PC-9 (cell line): ENCODE measurements at regions of chr17 and their contacts with region 1.

Region 1: GRCh38 chr17:72421128-72422092 is 300.6 kb downstream of the SOX9 start:
- DNase-seq: peak; percentile 90 to 99
- H3K4me3 ChIP-seq: peak overlapping the region; percentile 56; the same call in 1 of the 2 replicates
- H3K27ac ChIP-seq: peak overlapping the region; percentile 98
- H3K4me1 ChIP-seq: peaks cover 66% of the 10 kb centered on the region
- H3K27me3 ChIP-seq: no peaks in the 10 kb centered on the region
- CTCF ChIP-seq: no peak

Region 2: DNA sequence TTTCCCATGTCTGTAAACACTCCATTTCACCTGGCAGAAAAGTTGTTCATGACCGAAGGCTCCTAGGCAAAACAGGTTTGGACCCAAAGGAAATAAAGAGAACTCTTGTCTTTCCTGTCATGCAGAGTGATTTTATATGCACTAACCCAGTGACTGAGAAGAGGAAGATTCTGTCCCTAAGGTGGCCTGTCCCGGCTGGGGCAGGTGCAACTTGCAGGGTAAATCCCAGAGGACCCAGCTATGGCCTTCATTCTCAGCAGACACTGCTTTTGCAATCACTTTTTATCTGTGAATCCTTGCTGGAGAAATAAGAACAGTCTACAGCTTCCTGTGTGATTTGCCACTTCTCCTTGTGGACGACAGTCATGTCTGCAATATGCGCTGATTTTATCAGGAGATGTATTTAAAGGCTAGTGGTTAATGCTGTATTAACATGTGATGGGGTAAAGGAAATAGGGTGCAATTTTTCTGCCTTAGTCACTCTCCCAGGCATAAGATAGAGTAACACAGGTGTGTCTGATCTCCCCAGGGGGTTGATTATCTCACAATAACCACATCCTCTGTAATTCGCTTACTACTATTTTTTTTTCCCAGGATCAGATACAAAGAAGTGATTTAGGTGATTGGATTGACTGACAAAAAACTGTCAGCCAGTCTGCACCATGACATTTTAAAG is 997.4 kb before region 1 on chr17:
- CTCF ChIA-PET with region 1: no interaction called
- POLR2A ChIA-PET with region 1: no interaction called
- intact Hi-C with region 1: loop called (anchors 1 kb)
- DNase-seq: peak; percentile 59 to 98
- H3K4me3 ChIP-seq: 0 out of 2 replicates have a peak overlapping the region, but pooled peaks have one; percentile 10
- H3K27ac ChIP-seq: peak overlapping the region; percentile 96
- H3K4me1 ChIP-seq: peaks cover 24% of the 10 kb centered on the region
- H3K27me3 ChIP-seq: no peaks in the 10 kb centered on the region
- CTCF ChIP-seq: peak; percentile 30; the same call in 1 of the 2 replicates

Region 3: DNA sequence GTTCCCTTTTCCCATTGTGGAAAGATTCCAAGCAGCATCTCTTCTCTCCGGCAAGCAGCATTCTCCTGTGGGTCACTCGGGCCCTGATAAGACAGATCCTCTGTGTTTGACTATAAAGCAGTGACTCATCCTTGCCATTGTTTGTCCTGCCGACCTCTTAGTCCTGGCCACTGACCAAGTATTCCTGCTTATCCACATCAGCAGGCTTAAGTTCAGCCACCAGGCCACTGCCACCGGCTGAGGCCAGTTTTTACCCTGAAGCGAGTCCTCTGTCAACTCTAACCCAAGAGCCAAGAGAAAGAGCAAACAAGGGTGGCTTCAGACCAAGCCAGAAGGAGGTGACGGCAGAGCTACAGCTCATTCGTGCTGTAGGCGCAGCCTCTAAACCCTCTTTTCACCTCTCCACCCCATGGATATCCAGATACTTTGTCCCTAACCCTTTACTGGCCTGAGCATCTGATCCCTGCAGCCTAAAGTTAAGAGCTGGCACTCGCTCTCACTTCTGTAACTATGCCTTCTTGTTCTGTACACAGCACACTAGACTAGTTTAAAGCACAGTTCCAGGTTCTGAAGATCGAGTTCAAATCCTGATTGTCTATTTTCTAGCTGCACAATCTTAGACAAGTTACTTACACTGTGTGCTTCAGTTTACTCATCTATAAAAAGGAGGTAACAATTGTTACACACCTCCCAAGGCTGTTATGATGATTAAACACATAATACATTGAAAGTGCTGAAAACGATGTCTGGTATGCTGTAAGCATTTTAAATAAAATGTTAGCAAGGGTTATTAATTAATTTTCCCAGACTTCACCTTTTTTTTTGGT is 269.6 kb before region 1 on chr17:
- CTCF ChIA-PET with region 1: no interaction called
- POLR2A ChIA-PET with region 1: interaction called, 10 read pairs
- intact Hi-C with region 1: loop called (anchors 2 kb)
- DNase-seq: peak; percentile 86 to 99
- H3K4me3 ChIP-seq: peak overlapping the region; percentile 38; the same call in 1 of the 2 replicates
- H3K27ac ChIP-seq: peak overlapping the region; percentile 92
- H3K4me1 ChIP-seq: peaks cover 36% of the 10 kb centered on the region
- H3K27me3 ChIP-seq: no peaks in the 10 kb centered on the region
- CTCF ChIP-seq: no peak

Region 4: DNA sequence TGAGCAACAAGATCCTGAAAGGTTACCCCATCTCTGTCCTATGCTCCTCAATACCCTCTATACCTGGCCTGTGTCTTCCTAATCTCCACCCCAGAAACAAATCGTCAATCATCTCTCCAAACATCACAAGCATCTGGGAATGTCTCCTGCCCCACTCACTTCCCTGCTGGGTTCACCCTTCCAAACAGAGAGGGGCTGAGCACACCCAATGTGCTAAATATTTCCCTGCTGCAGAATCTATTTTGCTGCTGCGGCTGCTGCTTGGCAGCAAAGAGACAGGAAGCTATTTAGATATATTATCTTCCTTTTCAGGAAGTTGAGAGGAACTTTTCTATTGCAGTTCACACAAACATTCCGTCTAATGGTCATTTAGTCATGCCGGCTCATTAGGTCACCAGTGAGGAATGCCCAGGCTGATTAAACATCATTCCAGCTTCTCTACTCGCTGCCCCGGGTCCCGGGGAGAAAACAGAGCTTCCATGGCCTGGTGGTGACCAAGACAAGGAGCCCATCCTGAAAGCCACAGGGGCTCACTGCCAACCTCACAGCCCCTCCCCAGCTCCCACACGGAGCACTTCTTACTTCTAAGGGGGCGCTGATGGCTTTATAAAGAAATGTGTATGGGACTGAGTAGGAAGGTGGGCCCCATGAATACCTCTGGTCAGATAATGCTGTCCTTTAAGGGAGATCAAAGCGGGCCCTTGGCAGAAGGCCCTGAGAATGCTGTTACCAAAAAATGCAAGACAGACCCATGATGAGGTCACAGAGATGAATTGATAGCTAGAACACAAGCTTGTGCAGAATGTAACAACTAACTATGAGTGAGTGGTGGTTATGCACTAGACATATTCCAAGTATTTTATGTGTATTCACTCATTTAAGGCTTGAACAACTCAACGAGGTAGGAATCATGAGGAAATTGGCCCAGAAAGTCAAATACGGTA is 82.3 kb before region 1 on chr17:
- CTCF ChIA-PET with region 1: no interaction called
- POLR2A ChIA-PET with region 1: no interaction called
- intact Hi-C with region 1: loop called (anchors 1 kb)
- DNase-seq: peak; percentile 81 to 97
- H3K4me3 ChIP-seq: no peak overlapping the region; the same call in 1 of the 2 replicates
- H3K27ac ChIP-seq: peak overlapping the region; percentile 88
- H3K4me1 ChIP-seq: peaks cover 34% of the 10 kb centered on the region
- H3K27me3 ChIP-seq: no peaks in the 10 kb centered on the region
- CTCF ChIP-seq: no peak

Region 5: DNA sequence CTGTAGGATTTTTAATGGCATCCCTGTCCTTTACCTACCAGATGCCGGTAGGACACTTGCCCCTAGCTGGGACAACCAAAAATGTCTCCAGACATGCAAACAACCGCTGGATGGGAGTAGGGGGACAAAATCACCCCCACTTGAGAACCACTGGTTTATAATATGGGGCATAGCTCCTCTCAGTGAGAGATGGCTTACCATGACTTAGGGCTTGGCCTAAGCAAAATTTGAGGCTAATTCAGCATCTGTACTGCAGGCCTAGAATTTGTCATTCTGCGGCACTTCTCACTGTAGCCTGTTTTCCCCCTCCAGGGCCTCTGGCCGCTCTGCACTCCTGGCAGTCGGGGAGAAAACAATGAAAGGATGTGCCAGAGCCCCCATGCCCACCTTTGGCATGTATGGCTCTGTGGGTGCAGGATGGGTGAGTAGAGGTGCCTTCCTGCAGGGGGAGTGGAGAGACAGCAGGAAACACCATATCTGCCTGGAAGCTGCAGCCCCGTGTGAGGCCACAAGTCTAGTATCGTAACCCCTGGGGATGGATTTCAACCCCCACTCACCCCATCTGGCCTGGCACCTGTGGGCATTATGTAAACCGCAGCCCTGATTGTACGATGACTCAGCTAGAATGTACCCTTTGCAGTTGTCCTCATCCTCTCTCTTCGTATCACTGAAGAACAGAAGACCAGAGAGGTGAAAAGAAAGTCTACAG is 32.5 kb before region 1 on chr17:
- CTCF ChIA-PET with region 1: interaction called, 3 read pairs
- POLR2A ChIA-PET with region 1: no interaction called
- intact Hi-C with region 1: loop called (anchors 1 kb)
- DNase-seq: peak; percentile 86 to 89
- H3K4me3 ChIP-seq: no peak overlapping the region
- H3K27ac ChIP-seq: peak overlapping the region; percentile 87
- H3K4me1 ChIP-seq: peaks cover 86% of the 10 kb centered on the region
- H3K27me3 ChIP-seq: no peaks in the 10 kb centered on the region
- CTCF ChIP-seq: peak; percentile 63

Region 6: DNA sequence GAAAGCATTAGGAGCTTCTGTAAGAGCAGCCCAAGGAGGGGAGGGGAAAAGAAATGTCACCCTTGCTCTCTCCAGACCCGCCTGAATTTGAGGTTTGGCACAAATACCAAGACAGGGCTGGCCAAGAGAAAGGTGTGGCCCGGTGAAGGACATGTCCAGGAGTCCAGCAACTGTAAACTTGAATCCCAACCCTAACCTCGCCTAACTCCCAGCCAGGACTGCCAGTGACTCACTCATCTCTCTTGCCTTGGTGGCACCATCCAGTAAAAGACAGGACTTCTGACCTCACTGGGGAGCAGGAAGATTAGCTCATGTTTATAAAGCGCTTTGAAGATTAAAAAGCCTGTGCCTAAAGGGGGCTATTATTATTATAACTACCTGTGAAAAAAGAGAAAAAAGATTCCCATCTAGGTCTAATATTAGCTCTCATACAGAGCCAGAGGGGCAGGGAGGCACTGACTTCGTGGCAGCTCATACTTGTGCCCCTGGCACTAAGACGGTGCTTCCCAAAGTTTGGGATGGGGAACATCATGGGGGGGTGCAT is 34.7 kb after region 1 on chr17:
- CTCF ChIA-PET with region 1: no interaction called
- POLR2A ChIA-PET with region 1: interaction called, 3 read pairs
- intact Hi-C with region 1: loop called (anchors 1 kb)
- DNase-seq: peak; percentile 86 to 98
- H3K4me3 ChIP-seq: no peak overlapping the region
- H3K27ac ChIP-seq: peak overlapping the region; percentile 88
- H3K4me1 ChIP-seq: peaks cover 77% of the 10 kb centered on the region
- H3K27me3 ChIP-seq: no peaks in the 10 kb centered on the region
- CTCF ChIP-seq: no peak

Region 7: DNA sequence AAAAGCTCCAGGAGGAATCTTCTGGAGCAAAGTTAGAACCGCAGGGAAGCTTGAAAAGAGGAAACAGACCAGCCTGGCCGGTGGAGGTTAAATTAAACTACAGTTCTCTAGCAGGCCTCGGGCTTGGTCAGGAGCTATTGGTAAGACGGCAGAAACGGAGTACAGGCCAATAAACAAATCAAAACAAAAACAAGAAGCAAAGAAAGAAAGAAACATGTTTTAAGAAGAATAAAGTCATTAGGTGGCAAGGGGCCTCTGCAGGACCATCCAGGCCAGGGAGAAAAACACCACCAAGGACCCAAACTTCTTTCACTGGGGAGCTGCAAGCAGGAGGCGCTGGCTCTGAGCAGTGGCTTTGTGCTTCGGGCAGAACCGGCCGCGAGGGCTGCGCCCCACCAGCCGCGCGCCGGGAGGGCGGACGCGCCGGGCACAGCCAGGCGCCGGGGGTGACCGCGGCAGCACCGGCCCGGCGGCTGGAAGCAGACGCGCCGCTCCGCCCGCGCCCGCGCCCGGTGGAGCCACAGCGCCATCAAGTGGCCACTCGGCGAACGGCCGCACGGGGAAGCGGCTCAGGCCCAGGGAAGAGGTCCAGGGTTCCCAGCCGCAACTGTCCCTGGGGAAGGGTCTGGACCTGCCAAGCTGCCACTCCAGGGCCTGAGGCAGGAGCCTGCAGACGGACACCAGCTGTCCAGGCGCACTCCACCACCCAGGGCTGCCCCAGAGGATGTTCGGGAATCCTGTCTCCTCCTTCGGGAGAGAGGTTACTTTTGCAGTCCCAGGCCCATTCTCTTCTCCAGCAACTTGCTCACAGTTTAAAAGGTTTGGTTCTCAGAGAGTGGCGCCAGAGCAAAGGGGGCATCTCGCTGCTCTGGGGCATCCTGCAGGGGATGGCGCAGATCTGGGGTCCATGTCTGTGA is 118.8 kb after region 1 on chr17:
- CTCF ChIA-PET with region 1: no interaction called
- POLR2A ChIA-PET with region 1: no interaction called
- intact Hi-C with region 1: loop called (anchors 1 kb)
- DNase-seq: peak; percentile 45 to 88
- H3K4me3 ChIP-seq: peak overlapping the region; percentile 46; the same call in 1 of the 2 replicates
- H3K27ac ChIP-seq: peak overlapping the region; percentile 68
- H3K4me1 ChIP-seq: peaks cover 16% of the 10 kb centered on the region
- H3K27me3 ChIP-seq: no peaks in the 10 kb centered on the region
- CTCF ChIP-seq: peak; percentile 75

Region 8: GRCh38 chr17:73798111-73798748 is 1376.8 kb after region 1 on chr17:
- CTCF ChIA-PET with region 1: no interaction called
- POLR2A ChIA-PET with region 1: no interaction called
- intact Hi-C with region 1: no loop called
- DNase-seq: peak in 1 of 2 experiments; percentile 59
- H3K4me3 ChIP-seq: no peak overlapping the region
- H3K27ac ChIP-seq: no peak overlapping the region
- H3K4me1 ChIP-seq: no peaks in the 10 kb centered on the region
- H3K27me3 ChIP-seq: peaks cover 48% of the 10 kb centered on the region
- CTCF ChIP-seq: no peak